OCI-LY7 (cell line): ENCODE measurements at regions of chr5 and their contacts with region 1.

Region 1: GRCh38 chr5:59188419-59189225 is 605.7 kb downstream of the RAB3C start:
- DNase-seq: peak; percentile 65
- H3K4me3 ChIP-seq: no peak overlapping the region
- H3K27ac ChIP-seq: no peak overlapping the region
- H3K4me1 ChIP-seq: no peaks in the 10 kb centered on the region
- CTCF ChIP-seq: peak; percentile 88

Region 2: DNA sequence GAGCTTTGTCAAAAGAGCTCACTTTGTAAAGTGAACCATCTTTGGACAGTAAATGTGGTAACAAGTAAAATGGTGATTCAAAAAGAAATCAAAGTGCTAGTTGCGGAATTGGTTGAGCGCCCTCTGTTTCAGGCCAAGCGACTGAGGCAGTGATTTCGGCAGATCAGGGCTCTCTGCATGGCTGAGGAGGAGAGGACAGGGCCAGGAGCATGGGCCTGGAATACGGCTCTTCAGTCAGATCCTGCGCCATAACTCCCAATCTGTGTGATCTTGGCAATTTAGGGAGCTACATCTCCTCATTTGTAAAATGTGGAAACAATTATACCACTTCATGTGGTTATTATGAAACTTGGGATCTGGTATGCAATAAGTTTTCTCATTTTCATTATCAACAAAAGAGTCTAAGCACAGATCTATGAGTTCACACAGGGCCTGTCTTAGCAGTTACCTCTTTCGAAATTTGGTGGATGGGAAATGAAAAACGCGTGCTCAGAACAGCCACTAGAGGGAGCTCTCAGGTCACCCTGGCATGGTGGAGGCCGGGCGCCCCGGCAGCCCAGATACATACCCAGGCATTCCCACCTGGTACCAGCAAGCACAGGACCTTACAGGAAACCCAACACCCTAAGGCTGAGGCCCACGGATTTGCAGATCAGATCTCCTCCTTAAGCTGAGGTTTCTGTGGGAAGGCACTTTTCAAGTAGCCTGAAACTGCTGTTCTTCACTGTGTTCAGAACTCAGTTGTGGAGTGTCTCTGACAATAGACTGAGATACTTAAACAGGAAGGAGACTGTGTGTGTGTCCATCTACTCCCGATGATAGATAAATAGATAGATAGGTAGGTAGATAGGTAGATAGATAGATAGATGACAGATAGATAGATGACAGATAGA is 302.1 kb before region 1 on chr5:
- CTCF ChIA-PET with region 1: no interaction called
- POLR2A ChIA-PET with region 1: no interaction called
- intact Hi-C with region 1: loop called (anchors 5 kb)
- DNase-seq: peak; percentile 57
- H3K4me3 ChIP-seq: no peak overlapping the region
- H3K27ac ChIP-seq: no peak overlapping the region
- H3K4me1 ChIP-seq: no peaks in the 10 kb centered on the region
- CTCF ChIP-seq: peak; percentile 94

Region 3: DNA sequence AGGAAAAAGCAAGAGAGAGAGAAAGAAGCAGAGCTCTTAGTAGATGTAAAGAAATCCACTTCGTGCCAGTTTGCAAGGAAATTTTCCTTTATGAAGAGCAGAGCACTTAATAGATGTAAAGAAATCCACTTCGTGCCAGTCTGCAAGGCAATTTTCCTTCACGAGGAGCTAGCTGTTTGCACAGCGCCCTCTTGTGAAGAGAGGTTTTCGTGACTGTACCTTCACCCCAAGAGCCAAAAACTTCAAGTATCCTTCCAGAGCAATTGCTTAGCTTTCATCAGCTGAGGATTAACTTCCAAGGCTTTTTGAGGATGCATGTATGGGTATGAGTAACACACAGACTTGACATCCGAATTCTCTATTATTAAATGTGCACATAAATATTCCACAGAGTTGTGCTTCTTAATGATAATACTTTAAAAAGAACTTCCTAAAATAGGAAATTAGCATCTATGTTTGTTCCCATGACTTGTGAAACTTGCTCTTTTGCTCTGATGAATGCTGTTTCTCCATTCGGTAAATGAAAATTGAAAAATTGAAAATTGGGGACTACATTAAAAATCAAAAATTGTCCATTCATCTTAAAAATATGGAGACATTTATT is 179.3 kb after region 1 on chr5:
- CTCF ChIA-PET with region 1: no interaction called
- POLR2A ChIA-PET with region 1: interaction called, 3 read pairs
- intact Hi-C with region 1: loop called (anchors 5 kb)
- DNase-seq: peak; percentile 38
- H3K4me3 ChIP-seq: no peak overlapping the region
- H3K27ac ChIP-seq: no peak overlapping the region
- H3K4me1 ChIP-seq: no peaks in the 10 kb centered on the region
- CTCF ChIP-seq: peak; percentile 83

Region 4: GRCh38 chr5:59380350-59380951 is 191.8 kb after region 1 on chr5:
- CTCF ChIA-PET with region 1: no interaction called
- POLR2A ChIA-PET with region 1: no interaction called
- intact Hi-C with region 1: loop called (anchors 1 kb)
- DNase-seq: peak; percentile 56
- H3K4me3 ChIP-seq: no peak overlapping the region
- H3K27ac ChIP-seq: no peak overlapping the region
- H3K4me1 ChIP-seq: no peaks in the 10 kb centered on the region
- CTCF ChIP-seq: peak; percentile 74

Region 5: GRCh38 chr5:59660737-59661136 is 472.1 kb after region 1 on chr5:
- CTCF ChIA-PET with region 1: no interaction called
- POLR2A ChIA-PET with region 1: no interaction called
- intact Hi-C with region 1: loop called (anchors 10 kb)
- DNase-seq: peak; percentile 33
- H3K4me3 ChIP-seq: no peak overlapping the region
- H3K27ac ChIP-seq: no peak overlapping the region
- H3K4me1 ChIP-seq: peaks cover 7% of the 10 kb centered on the region
- CTCF ChIP-seq: peak; percentile 73